MCF 10A (cell line): ENCODE measurements at regions of chr2 and their contacts with region 1.

Region 1: GRCh38 chr2:162007447-162008040 is 66.5 kb downstream of the DPP4 start:
- DNase-seq: no peak
- H3K4me3 Mint-ChIP-seq: no peak overlapping the region
- H3K27ac Mint-ChIP-seq: no peak overlapping the region
- H3K4me1 Mint-ChIP-seq: no peaks in the 10 kb centered on the region
- H3K27me3 Mint-ChIP-seq: peaks cover 22% of the 10 kb centered on the region
- CTCF ChIP-seq: peak; percentile 72

Region 2: DNA sequence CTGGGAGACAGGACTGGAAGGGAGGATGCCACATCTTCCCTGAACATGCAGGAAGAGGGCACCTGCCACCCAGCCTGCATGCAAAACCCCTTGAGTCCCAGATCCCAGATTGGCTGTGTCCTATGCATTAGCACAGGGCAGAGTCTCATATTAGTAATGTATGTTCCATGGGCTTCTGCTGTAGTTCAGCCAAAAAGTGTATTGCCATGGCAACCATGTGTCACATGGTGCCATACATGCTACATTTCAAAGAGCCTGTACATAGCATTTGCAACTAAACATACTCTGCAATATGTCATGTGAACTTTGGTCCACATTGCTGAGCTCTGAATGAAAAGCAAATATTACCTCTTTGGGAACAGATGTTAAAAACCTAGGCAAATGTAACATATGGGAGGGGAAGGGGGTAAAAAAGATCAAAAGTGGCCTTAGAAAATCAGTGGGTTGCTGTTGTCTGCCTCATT is 12.0 kb before region 1 on chr2:
- CTCF ChIA-PET with region 1: interaction called, 18 read pairs
- POLR2A ChIA-PET with region 1: interaction called, 3 read pairs
- intact Hi-C with region 1: no loop called
- DNase-seq: no peak
- H3K4me3 Mint-ChIP-seq: no peak overlapping the region
- H3K27ac Mint-ChIP-seq: no peak overlapping the region
- H3K4me1 Mint-ChIP-seq: peaks cover 11% of the 10 kb centered on the region
- H3K27me3 Mint-ChIP-seq: peaks cover 14% of the 10 kb centered on the region
- CTCF ChIP-seq: no peak

Region 3: DNA sequence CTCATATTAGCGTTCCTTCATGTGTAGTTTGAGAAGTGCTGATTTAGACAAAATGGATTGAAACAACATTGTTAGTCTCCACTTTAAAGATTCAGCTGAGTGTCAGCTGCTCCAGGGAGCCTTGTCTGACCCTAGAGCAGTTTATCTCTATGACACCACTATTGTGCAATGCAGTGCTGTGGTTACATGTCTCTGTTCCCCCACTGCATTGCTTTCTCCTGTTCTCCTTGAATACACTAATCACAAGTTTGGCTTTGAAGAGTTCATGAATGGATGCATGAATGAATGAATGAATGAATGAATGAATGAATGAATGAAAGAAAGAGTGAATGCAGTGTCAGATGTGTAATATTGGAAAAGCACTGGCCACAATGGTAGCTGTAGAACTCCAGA is 106.2 kb after region 1 on chr2:
- CTCF ChIA-PET with region 1: interaction called, 10 read pairs
- POLR2A ChIA-PET with region 1: interaction called, 5 read pairs
- intact Hi-C with region 1: no loop called
- DNase-seq: peak; percentile 72
- H3K4me3 Mint-ChIP-seq: no peak overlapping the region
- H3K27ac Mint-ChIP-seq: no peak overlapping the region
- H3K4me1 Mint-ChIP-seq: peaks cover 16% of the 10 kb centered on the region
- H3K27me3 Mint-ChIP-seq: no peaks in the 10 kb centered on the region
- CTCF ChIP-seq: no peak

Region 4: DNA sequence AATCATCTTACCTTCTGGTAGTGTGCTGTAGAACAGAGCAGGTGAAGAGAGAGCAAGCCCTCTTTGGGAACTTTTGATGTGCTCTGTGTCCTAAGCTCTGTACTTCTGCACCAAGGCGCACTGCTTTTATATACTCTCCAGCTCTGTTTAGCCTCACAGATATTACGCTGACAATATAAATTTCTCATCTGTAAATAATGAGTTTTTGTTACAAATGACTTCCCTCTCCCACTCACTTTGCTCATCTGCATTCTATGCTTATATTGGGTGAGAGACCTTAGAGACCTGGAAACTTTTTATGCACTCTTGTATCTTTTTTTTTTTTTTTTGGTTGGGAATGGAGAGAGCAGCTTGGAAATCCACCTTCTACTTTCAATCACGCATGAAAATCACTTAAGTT is 144.6 kb after region 1 on chr2 and contains the start of gene GCG:
- CTCF ChIA-PET with region 1: no interaction called
- POLR2A ChIA-PET with region 1: no interaction called
- intact Hi-C with region 1: no loop called
- DNase-seq: no peak
- H3K4me3 Mint-ChIP-seq: no peak within 1 kb of the TSS
- H3K27ac Mint-ChIP-seq: no peak within 1 kb of the TSS
- H3K4me1 Mint-ChIP-seq: peaks cover 7% of the 10 kb centered on the region
- H3K27me3 Mint-ChIP-seq: peaks cover 50% of the 10 kb centered on the region
- CTCF ChIP-seq: no peak
- total RNA-seq, gene GCG: not detected in 2 replicates